ENCODE measurements at regions of chr9 and their contacts with region 1.

Region 1: DNA sequence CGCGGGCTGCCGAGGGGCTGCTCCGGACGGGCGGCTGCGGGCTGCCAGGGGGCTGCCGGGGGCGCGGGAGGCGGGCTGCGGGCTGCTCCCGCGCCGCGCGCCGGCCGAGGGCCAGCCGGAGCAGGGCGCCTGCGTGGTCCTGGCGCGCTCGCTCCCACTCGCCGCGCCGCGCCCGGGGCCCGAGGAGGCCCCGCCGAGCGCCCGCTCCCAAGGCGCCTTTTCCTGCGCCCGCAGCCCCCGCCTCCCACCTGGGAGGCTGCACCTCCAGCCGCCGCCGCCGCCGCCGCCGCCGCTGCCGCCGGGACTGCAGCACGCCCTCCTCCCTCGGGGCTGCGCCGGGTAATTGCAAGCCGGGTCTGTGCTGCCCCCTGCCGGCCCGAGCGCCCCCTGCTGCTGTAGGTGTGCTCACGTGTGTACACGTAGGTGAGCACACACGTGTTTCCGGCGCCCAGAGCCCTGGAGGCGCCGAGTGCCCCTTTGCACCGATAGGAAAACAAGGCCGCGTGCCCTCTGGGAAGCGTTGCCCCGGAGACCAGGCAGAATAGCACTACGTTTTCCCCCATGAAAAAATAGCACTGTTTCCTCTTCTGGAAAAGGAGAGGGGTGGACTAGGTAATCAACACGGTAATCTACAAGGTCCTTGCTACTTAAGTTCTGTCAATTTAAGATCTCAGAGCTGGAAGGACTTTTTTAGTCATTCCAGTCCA is at the start of gene EPB41L4B:
- DNase-seq: peak; percentile 86 to 96 (median 94)
- ATAC-seq: peak; percentile 81 to 82
- H3K4me3 ChIP-seq: peak within 1 kb of the TSS; percentile 90
- H3K27ac ChIP-seq: peak within 1 kb of the TSS; percentile 9
- H3K4me1 ChIP-seq: peaks cover 2% of the 10 kb centered on the region
- H3K27me3 ChIP-seq: no peaks in the 10 kb centered on the region
- total RNA-seq, gene EPB41L4B: 20.1 to 39.2 (median 27.0) TPM

Region 2: DNA sequence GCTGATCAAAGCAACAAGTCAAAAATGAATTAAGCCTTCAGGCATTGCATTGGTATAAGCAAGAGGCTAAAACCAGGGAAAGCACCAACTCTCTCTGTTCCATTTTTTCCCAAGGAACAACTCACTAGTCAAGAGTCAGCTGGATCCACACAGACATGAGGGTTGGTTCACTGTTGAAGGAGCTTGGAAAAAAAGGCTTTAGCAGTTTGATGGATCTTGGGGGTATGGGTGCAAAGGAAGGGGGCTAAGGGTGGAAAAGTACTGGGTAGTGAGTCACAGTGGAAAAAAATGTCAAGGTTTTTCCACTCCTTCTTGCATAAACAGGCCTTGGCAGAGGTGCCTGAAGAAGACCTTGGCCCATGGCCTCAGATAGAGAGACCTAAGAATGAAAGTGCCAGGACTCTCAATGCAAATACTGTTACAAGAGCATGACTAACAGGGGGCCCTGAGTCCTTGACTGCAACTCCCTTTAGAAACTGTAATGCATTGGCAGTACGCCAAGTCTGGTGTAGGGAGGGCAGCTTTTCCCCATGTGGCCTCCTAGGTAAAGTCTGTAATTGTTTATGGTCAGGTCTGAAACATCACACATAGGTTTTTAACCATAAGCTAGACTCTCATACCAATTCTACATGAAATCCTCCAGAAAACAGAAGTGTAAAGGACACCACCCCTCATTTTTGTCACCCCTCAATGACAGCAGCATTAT is 435.1 kb before region 1 on chr9:
- intact Hi-C with region 1: loop called in 2 of 4 experiments (anchors 10 kb)
- DNase-seq: peak in 1 of 3 donors; percentile 47
- ATAC-seq: peak; percentile 39 to 48
- H3K4me3 ChIP-seq: no peak overlapping the region
- H3K27ac ChIP-seq: no peak overlapping the region
- H3K4me1 ChIP-seq: no peaks in the 10 kb centered on the region
- H3K27me3 ChIP-seq: no peaks in the 10 kb centered on the region

Region 3: GRCh38 chr9:109101810-109102209 is 219.1 kb before region 1 on chr9:
- intact Hi-C with region 1: loop called in 1 of 4 experiments (anchors 10 kb)
- DNase-seq: no peak
- ATAC-seq: peak in 1 of 2 donors; percentile 68
- H3K4me3 ChIP-seq: no peak overlapping the region
- H3K27ac ChIP-seq: no peak overlapping the region
- H3K4me1 ChIP-seq: peaks cover 12% of the 10 kb centered on the region
- H3K27me3 ChIP-seq: no peaks in the 10 kb centered on the region

Region 4: GRCh38 chr9:109182940-109183798 is 137.7 kb before region 1 on chr9:
- intact Hi-C with region 1: loop called in 1 of 4 experiments (anchors 5 kb)
- DNase-seq: peak in 2 of 3 donors; percentile 34 to 57
- ATAC-seq: peak; percentile 36 to 54
- H3K4me3 ChIP-seq: no peak overlapping the region
- H3K27ac ChIP-seq: no peak overlapping the region
- H3K4me1 ChIP-seq: no peaks in the 10 kb centered on the region
- H3K27me3 ChIP-seq: no peaks in the 10 kb centered on the region

Region 5: DNA sequence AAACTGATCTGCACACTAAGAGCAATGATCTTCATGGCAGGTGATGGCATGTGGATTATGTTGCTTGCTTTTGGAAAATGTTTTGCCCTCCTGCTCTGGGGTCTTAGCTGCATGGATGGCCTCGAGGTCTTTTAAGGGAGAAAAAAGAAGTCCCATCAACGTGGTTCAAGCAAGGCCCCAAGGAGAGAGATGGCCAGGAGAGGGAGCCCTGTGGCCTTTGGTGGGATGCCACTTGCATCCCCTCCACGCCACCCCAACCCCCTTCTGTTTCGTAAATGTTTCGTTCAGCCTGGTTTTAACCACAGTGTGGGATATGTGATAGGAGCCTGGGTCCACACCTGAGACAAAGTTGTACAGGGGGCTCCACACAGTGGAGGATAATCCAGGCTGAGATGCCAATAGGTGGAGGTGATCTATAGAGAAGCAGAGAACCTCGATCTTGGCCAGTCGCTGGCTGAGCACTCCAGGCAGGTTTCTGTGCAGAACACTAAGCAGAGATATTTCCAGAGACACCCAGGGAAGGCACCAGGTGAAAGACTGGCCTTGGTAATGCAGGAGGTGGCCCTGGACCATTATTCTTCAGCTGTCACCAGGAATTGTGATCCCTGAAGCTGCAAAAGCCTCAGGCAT is 128.0 kb before region 1 on chr9:
- intact Hi-C with region 1: loop called in 2 of 4 experiments (anchors 5 to 10 kb)
- DNase-seq: peak; percentile 40 to 81 (median 63)
- ATAC-seq: peak; percentile 63 to 64
- H3K4me3 ChIP-seq: no peak overlapping the region
- H3K27ac ChIP-seq: no peak overlapping the region
- H3K4me1 ChIP-seq: no peaks in the 10 kb centered on the region
- H3K27me3 ChIP-seq: no peaks in the 10 kb centered on the region

Region 6: GRCh38 chr9:109244157-109245132 is 76.5 kb before region 1 on chr9:
- intact Hi-C with region 1: loop called (anchors 2 to 5 kb)
- DNase-seq: peak; percentile 68 to 90 (median 86)
- ATAC-seq: peak; percentile 81 to 82
- H3K4me3 ChIP-seq: no peak overlapping the region
- H3K27ac ChIP-seq: peak overlapping the region; percentile 83
- H3K4me1 ChIP-seq: no peaks in the 10 kb centered on the region
- H3K27me3 ChIP-seq: no peaks in the 10 kb centered on the region

Region 7: GRCh38 chr9:109381011-109381729 is 60.3 kb after region 1 on chr9:
- intact Hi-C with region 1: no loop called
- DNase-seq: no peak
- ATAC-seq: no peak
- H3K4me3 ChIP-seq: no peak overlapping the region
- H3K27ac ChIP-seq: no peak overlapping the region
- H3K4me1 ChIP-seq: no peaks in the 10 kb centered on the region
- H3K27me3 ChIP-seq: no peaks in the 10 kb centered on the region

Measured in right cardiac atrium (tissue), 5 donors.